MCF 10A (cell line): ENCODE measurements at regions of chr7 and their contacts with region 1.

Region 1: GRCh38 chr7:30026229-30027064 is at the start of gene FKBP14:
- DNase-seq: peak; percentile 98
- H3K4me3 Mint-ChIP-seq: no peak within 1 kb of the TSS
- H3K27ac Mint-ChIP-seq: peak within 1 kb of the TSS; percentile 92
- H3K4me1 Mint-ChIP-seq: peaks cover 26% of the 10 kb centered on the region
- H3K27me3 Mint-ChIP-seq: no peaks in the 10 kb centered on the region
- CTCF ChIP-seq: no peak
- total RNA-seq, gene FKBP14: 39.8 and 49.8 TPM in 2 replicates

Region 2: DNA sequence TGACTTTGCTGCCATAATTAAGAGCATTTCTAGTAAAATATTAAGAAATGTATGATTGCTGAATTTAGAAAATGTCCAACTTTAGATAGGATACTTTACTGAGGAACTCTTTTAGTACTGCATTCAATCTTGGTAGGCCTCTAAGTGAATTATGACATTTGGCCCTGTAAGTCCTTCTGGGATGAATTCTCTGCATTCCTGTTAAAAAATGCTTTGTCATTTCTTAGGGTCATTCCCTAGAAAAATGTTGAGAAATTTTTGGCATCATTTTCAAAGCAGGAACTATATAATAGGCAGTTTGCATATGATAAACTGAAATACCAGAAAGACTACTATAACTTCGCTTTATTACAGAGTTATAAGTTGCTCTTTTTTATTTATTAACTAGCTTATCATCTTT is 532.1 kb before region 1 on chr7:
- CTCF ChIA-PET with region 1: no interaction called
- POLR2A ChIA-PET with region 1: no interaction called
- intact Hi-C with region 1: no loop called
- DNase-seq: peak; percentile 32
- H3K4me3 Mint-ChIP-seq: no peak overlapping the region
- H3K27ac Mint-ChIP-seq: no peak overlapping the region
- H3K4me1 Mint-ChIP-seq: peaks cover 5% of the 10 kb centered on the region
- H3K27me3 Mint-ChIP-seq: no peaks in the 10 kb centered on the region
- CTCF ChIP-seq: no peak

Region 3: DNA sequence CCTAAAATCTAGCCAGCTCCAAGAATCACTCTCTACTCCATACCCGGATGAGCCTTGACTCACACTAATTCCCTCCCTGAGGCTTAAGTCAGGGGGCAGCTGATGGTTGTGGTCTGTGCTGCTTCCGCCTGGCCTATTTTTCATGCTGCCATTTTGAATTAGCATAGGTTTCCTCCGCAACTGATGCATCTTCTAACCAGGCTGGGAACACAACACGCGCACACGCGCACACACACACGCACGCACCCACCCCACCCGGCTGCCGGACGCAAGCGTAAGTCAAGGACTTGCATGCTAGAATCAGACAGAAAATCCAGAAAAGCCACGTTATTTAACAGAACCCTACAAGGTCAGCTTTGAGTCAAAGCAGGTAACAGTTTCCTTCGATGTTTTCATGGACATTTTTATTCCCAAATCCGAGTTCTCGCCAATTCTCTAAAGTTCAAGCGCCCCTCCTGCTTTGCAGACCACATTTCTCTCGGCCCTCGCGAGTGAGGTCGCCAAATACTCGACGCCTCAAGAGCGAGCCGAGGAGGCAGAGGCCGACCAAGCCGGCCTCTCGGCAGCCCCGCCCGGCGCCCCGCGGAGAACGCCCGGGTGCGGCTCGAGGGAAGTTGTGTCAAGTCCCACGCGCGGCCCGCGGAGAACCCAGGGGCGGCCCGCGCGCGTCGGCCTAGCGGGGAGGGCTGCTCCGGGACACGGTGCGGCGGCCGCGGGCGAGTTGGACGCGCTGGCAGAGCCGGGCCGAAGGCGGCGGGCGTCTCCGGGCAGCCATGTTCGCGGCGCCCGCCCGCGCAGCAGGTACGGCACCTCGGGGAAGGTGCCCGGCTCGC is 37.8 kb before region 1 on chr7:
- CTCF ChIA-PET with region 1: interaction called, 4 read pairs
- POLR2A ChIA-PET with region 1: interaction called, 40 read pairs
- intact Hi-C with region 1: no loop called
- DNase-seq: peak; percentile 35
- H3K4me3 Mint-ChIP-seq: peak overlapping the region; percentile 64
- H3K27ac Mint-ChIP-seq: peak overlapping the region; percentile 89
- H3K4me1 Mint-ChIP-seq: peaks cover 22% of the 10 kb centered on the region
- H3K27me3 Mint-ChIP-seq: no peaks in the 10 kb centered on the region
- CTCF ChIP-seq: no peak

Region 4: DNA sequence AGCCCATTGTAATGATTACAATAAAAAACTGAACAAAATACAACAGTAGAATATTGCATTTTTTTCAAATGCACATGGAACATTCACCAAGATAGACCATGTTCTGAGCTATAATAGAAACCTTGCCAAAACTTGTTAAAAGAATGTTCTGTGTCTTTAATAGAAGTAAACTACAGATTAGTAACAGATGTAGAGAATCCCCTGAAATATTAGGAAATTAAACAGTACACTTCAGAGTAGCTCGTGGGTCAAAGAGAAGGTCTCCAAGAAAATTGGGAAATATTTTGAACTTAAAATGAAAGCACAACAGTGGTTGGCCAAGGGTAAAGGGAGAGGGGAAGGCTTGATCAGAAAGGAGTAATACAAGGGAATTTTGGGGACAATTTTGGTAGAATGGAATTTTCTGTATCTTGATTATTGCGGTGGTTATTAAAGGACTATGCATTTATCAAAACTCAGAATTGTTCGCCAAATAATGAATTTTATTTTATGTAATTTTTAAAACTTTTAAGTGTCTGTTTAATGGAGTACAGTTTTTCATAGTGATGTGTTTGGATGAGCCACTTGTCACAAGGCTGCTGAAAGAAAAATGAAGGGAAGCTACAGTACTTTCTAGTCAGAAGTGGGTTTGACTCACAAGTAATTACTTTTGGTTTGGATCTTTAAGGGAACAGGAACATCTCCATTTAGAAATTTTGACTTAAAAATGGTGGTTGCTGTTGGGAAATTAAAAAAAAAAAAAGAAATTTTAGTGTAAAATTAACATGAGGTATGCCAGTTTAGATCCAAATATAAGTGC is 11.9 kb after region 1 on chr7:
- CTCF ChIA-PET with region 1: no interaction called
- POLR2A ChIA-PET with region 1: interaction called, 15 read pairs
- intact Hi-C with region 1: no loop called
- DNase-seq: no peak
- H3K4me3 Mint-ChIP-seq: no peak overlapping the region
- H3K27ac Mint-ChIP-seq: no peak overlapping the region
- H3K4me1 Mint-ChIP-seq: no peaks in the 10 kb centered on the region
- H3K27me3 Mint-ChIP-seq: no peaks in the 10 kb centered on the region
- CTCF ChIP-seq: no peak

Region 5: GRCh38 chr7:30062591-30062990 is 36.1 kb after region 1 on chr7:
- CTCF ChIA-PET with region 1: interaction called, 7 read pairs
- POLR2A ChIA-PET with region 1: interaction called, 6 read pairs
- intact Hi-C with region 1: loop called (anchors 2 kb)
- DNase-seq: peak; percentile 57
- H3K4me3 Mint-ChIP-seq: no peak overlapping the region
- H3K27ac Mint-ChIP-seq: no peak overlapping the region
- H3K4me1 Mint-ChIP-seq: no peaks in the 10 kb centered on the region
- H3K27me3 Mint-ChIP-seq: no peaks in the 10 kb centered on the region
- CTCF ChIP-seq: peak; percentile 49

Region 6: DNA sequence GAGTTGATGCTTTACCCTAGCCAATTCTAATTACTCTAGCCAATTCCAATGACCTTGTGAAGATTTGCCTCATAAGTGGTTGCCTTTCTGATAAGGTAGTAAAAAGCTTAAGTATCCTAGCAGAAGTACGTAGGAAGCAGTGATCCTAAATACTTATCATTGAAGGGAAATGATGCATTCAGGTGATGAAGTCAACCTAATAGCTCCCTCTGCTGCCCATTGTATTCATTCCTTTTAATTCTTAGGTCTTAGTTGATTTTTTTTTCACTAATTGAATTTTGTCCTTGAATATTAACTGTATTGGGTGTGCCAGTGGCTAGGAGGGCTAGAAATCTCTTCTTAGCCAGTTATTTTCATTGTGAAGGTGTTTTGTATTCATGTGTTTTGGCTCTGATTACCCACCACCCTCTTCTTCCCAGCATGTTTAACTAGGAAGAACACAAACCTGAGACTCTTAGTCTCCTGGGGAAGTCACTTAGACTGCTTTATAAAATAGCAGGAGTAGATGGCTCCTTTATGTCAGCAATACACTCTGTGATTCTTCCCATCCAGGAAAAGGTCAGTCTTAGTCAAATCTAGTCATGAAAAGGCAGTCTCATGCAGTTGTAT is 48.1 kb after region 1 on chr7:
- CTCF ChIA-PET with region 1: interaction called, 4 read pairs
- POLR2A ChIA-PET with region 1: interaction called, 11 read pairs
- intact Hi-C with region 1: no loop called
- DNase-seq: peak; percentile 59
- H3K4me3 Mint-ChIP-seq: no peak overlapping the region
- H3K27ac Mint-ChIP-seq: no peak overlapping the region
- H3K4me1 Mint-ChIP-seq: peaks cover 6% of the 10 kb centered on the region
- H3K27me3 Mint-ChIP-seq: no peaks in the 10 kb centered on the region
- CTCF ChIP-seq: peak; percentile 40

Region 7: DNA sequence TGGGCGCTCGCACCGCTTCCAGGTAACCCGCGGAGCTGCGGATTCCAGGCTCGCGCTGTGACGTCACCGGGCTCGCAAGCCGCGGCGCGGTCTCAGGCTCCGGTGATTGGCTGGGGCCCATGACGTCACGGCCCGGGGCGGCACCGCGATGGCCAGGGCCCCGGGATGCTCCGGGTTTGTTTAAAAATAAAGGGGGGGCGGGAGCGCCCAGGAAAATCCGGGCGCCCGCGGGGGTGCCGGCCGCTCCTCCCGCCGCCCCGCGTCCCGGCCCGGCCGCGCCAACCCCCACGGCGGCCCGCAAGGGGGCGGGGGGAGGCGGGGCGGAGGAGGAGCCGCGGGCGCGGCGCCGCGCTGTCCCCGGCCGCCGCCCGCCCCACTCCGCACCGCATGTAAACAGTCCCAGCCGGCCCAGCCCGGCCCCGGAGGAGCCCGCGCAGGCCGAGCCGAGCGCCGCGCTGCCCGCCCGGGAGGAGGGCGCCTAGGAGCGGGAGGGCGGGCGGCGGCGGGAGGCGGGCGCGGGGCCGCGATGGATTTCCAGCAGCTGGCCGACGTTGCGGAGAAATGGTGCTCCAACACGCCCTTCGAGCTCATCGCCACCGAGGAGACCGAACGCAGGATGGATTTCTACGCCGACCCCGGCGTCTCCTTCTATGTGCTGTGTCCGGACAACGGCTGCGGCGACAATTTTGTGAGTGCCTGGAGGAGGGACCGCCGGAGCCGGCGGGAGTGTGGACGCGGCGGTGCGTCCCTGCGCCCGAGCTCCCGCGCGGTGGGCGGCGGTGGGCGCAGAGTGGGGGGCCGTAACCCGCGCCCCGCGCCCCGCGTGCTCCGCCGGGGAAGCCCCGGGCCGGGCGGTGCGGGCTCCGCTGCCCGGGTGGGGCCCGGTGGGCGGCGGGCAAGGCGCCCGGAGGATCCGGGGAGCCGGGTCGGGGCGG is 108.4 kb after region 1 on chr7 and contains the start of gene MTURN:
- CTCF ChIA-PET with region 1: interaction called, 4 read pairs
- POLR2A ChIA-PET with region 1: interaction called, 14 read pairs
- intact Hi-C with region 1: no loop called
- DNase-seq: peak; percentile 75
- H3K4me3 Mint-ChIP-seq: peak within 1 kb of the TSS; percentile 92
- H3K27ac Mint-ChIP-seq: peak within 1 kb of the TSS; percentile 27
- H3K4me1 Mint-ChIP-seq: no peaks in the 10 kb centered on the region
- H3K27me3 Mint-ChIP-seq: no peaks in the 10 kb centered on the region
- CTCF ChIP-seq: no peak
- total RNA-seq, gene MTURN: 7.5 and 10.5 TPM in 2 replicates